ENCODE measurements at regions of chr3 and their contacts with region 1.

Region 1: GRCh38 chr3:153970741-153971347 is 150.3 kb upstream of the ARHGEF26 start:
- DNase-seq: peak; percentile 62
- ATAC-seq: peak; percentile 72
- H3K4me3 ChIP-seq: no peak overlapping the region
- H3K27ac ChIP-seq: no peak overlapping the region
- H3K4me1 ChIP-seq: peaks cover 8% of the 10 kb centered on the region
- H3K27me3 ChIP-seq: no peaks in the 10 kb centered on the region
- CTCF ChIP-seq: peak; percentile 82

Region 2: DNA sequence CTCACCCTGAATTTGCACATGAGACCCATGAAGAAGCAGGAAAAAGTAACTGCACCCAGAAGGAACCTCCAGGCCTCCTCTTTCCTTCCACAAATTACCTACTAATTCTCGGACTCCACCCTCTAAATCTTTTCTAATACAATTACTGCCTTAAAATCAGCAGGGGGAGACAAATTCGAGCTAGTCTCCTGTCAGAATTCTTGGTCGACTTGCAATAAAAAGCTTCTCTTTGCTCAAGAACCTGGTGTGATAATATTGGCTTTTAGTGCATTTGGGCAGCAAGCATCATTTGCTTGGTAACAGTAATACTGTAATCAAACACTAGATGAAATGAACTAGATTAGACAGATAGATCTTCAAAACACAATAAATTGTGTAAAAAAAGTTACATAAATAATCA is 526.9 kb before region 1 on chr3:
- CTCF ChIA-PET with region 1: interaction called, 3 read pairs
- POLR2A ChIA-PET with region 1: no interaction called
- intact Hi-C with region 1: loop called (anchors 5 kb)
- DNase-seq: peak; percentile 65
- ATAC-seq: no peak
- H3K4me3 ChIP-seq: no peak overlapping the region
- H3K27ac ChIP-seq: no peak overlapping the region
- H3K4me1 ChIP-seq: no peaks in the 10 kb centered on the region
- H3K27me3 ChIP-seq: no peaks in the 10 kb centered on the region
- CTCF ChIP-seq: peak; percentile 72

Region 3: DNA sequence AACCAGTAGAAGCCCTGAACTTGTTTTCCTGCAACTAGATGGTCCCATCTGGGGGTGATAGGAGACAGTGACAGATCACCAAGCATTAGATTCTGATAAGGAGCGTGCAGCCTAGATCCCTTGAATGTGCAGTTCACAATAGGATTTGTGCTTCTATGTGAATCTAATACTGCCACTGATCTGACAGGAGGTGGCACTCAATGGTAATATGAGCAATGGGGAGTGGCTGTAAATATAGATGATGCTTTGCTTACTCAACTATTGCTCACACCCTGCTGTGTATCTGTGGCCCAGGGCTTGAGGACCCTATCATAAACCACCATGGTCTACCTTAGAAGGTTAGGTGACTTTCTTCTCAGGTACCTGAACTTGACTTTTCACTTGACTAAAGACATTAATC is 266.7 kb before region 1 on chr3:
- CTCF ChIA-PET with region 1: no interaction called
- POLR2A ChIA-PET with region 1: no interaction called
- intact Hi-C with region 1: loop called (anchors 5 kb)
- DNase-seq: peak; percentile 61
- ATAC-seq: peak; percentile 80
- H3K4me3 ChIP-seq: no peak overlapping the region
- H3K27ac ChIP-seq: no peak overlapping the region
- H3K4me1 ChIP-seq: peaks cover 12% of the 10 kb centered on the region
- H3K27me3 ChIP-seq: no peaks in the 10 kb centered on the region
- CTCF ChIP-seq: peak; percentile 51

Region 4: GRCh38 chr3:153881201-153881600 is 89.6 kb before region 1 on chr3:
- CTCF ChIA-PET with region 1: no interaction called
- POLR2A ChIA-PET with region 1: no interaction called
- intact Hi-C with region 1: no loop called
- DNase-seq: peak; percentile 85
- ATAC-seq: peak; percentile 86
- H3K4me3 ChIP-seq: peak overlapping the region; percentile 9; the same call in 1 of the 2 replicates
- H3K27ac ChIP-seq: peak overlapping the region; percentile 94
- H3K4me1 ChIP-seq: peaks cover 38% of the 10 kb centered on the region
- H3K27me3 ChIP-seq: no peaks in the 10 kb centered on the region
- CTCF ChIP-seq: no peak

Measured in PC-3 (cell line).